CD4-positive, alpha-beta memory T cell (primary cell): ENCODE measurements at regions of chr13 and their contacts with region 1.

Region 1: DNA sequence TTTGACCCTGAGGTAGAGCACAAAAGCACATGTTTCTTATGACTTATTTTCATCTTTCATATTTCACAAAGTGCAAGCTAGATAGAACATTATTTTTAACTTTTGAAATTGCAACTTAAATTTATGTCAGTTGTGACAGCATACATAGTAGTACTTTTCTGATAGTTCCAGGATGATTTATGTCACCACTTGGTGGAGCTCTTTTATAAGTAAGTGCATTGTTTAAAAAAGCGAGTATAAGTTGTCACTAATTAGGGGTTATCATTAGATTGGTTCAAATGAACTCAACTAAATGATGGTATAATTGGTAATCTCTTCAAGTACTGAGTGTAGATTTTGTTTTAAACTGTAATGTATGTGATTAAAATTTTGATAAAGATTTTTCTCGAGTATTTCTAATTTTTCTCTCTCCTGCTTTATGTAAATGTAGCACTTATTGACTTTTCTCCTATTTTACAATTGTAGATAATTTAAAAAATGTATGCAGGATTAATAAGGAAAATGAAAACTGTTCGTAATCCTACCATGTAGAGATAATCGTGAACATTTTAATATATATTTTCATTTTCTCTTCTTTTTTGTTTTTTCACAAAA is 31.1 kb downstream of the RB1 start:
- DNase-seq: peak in 4 of 5 donors; percentile 50 to 55 (median 52)
- H3K4me3 ChIP-seq: no peak overlapping the region
- H3K4me3 Mint-ChIP-seq: no peak overlapping the region
- H3K27ac ChIP-seq: no peak overlapping the region
- H3K27ac Mint-ChIP-seq: peak overlapping the region in 1 of 7 donors; percentile 13
- H3K4me1 ChIP-seq: peaks cover 8% of the 10 kb centered on the region
- H3K4me1 Mint-ChIP-seq: peaks cover 6 to 16% (median 10%) of the 10 kb centered on the region in 4 donors
- H3K27me3 ChIP-seq: no peaks in the 10 kb centered on the region
- H3K27me3 Mint-ChIP-seq: no peaks in the 10 kb centered on the region

Region 2: DNA sequence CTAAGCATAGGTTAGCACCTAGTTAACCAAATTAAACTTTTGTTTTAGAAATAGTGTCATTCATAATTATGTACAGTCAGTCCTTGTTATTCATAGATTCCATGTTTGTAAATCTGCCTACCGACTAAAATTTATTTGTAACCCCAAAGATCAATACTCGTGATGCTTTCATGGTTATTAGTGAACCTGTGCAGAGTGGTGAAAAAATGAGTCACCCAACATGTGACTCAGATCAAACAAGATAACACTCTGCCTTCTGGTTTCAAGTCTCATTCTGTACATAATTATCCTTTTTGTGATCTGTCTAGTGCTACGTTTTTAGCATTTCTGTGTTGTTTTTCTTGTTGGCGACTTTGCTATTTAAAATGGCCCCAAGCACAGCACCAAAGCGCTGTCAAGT is 608.3 kb before region 1 on chr13:
- CTCF ChIA-PET with region 1: no interaction called
- POLR2A ChIA-PET with region 1: no interaction called
- intact Hi-C with region 1: no loop called
- DNase-seq: no peak
- H3K4me3 ChIP-seq: no peak overlapping the region
- H3K4me3 Mint-ChIP-seq: no peak overlapping the region
- H3K27ac ChIP-seq: no peak overlapping the region
- H3K27ac Mint-ChIP-seq: no peak overlapping the region
- H3K4me1 ChIP-seq: no peaks in the 10 kb centered on the region
- H3K4me1 Mint-ChIP-seq: no peaks in the 10 kb centered on the region
- H3K27me3 ChIP-seq: no peaks in the 10 kb centered on the region
- H3K27me3 Mint-ChIP-seq: no peaks in the 10 kb centered on the region

Region 3: DNA sequence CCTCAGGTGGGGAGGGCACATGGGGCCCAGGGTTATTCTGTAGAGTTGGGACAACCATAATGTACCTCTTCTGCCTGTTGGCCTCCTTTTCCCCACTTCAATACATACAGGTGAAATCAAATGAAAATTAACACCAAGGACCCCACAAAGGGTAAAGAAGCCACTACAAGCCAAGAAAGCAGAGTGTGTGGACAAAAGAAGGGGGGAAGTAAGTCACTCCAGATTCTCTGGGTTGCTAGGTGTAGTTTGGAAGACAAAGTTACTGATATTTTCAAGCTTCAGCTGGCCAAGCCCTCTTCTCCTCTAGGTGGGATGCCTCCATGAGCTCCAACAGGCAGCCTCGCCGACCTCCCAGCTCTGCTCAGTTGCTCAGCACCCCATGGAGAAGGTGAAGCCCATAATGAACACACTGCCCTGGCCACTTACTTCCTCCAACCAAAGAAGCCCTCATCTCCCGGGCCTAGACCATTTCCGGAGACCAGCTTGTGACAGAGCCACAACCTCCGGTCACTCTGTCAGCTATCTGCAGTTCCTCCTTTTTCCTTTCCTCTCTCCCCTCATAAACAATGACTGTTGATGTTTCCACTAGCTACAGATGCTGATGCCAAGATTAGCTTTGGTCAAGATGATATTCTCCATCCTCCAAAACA is 173.0 kb before region 1 on chr13:
- CTCF ChIA-PET with region 1: no interaction called
- POLR2A ChIA-PET with region 1: no interaction called
- intact Hi-C with region 1: no loop called
- DNase-seq: no peak
- H3K4me3 ChIP-seq: no peak overlapping the region
- H3K4me3 Mint-ChIP-seq: no peak overlapping the region
- H3K27ac ChIP-seq: no peak overlapping the region
- H3K27ac Mint-ChIP-seq: peak overlapping the region in 2 of 7 donors; percentile 49 to 54
- H3K4me1 ChIP-seq: peaks cover 39% of the 10 kb centered on the region
- H3K4me1 Mint-ChIP-seq: peaks cover 17 to 48% (median 31%) of the 10 kb centered on the region in 4 donors
- H3K27me3 ChIP-seq: no peaks in the 10 kb centered on the region
- H3K27me3 Mint-ChIP-seq: no peaks in the 10 kb centered on the region

Region 4: GRCh38 chr13:48571126-48571913 is 236.7 kb after region 1 on chr13:
- CTCF ChIA-PET with region 1: interaction called, 238 read pairs
- POLR2A ChIA-PET with region 1: no interaction called
- intact Hi-C with region 1: no loop called
- DNase-seq: no peak
- H3K4me3 ChIP-seq: no peak overlapping the region
- H3K4me3 Mint-ChIP-seq: peak overlapping the region in 5 of 8 donors; percentile 12 to 47 (median 31)
- H3K27ac ChIP-seq: no peak overlapping the region
- H3K27ac Mint-ChIP-seq: peak overlapping the region in 3 of 7 donors; percentile 14 to 66 (median 25)
- H3K4me1 ChIP-seq: peaks cover 43% of the 10 kb centered on the region
- H3K4me1 Mint-ChIP-seq: peaks cover 17 to 54% (median 33%) of the 10 kb centered on the region in 4 donors
- H3K27me3 ChIP-seq: no peaks in the 10 kb centered on the region
- H3K27me3 Mint-ChIP-seq: peaks cover 0 to 2% of the 10 kb centered on the region in 2 donors

Region 5: DNA sequence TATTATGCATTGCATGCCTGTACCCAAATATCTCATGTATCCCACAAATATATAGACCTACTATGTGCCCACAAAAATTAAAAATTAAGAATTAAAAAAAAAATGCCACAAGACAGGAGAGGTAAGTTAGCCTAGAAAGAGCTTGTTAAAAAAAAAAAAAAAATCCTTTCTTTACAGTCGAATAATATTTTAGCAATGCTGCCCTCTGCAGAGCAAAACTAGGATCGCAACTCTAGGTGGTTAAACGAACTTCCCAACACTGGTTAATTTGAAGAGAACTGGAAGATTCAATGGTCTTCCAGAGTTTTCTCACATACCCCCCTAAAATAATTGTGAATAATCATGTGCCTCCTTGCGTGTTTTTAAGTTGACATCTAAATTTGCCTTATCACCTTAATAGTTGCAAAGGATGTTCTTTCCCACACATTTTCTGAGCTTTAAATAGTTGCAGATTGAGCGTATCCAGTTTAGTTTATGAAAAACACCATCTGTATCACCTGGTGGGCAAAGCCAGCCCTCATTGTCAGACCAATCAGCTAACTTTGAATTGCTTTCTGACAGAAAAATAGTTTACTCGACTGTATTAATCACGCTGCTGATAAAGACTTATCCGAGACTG is 245.7 kb after region 1 on chr13:
- CTCF ChIA-PET with region 1: interaction called, 238 read pairs
- POLR2A ChIA-PET with region 1: interaction called, 21 read pairs
- intact Hi-C with region 1: loop called (anchors 1 kb)
- DNase-seq: peak; percentile 64 to 74 (median 70)
- H3K4me3 ChIP-seq: no peak overlapping the region
- H3K4me3 Mint-ChIP-seq: peak overlapping the region in 1 of 8 donors; percentile 31
- H3K27ac ChIP-seq: no peak overlapping the region
- H3K27ac Mint-ChIP-seq: peak overlapping the region in 2 of 7 donors; percentile 0 to 43
- H3K4me1 ChIP-seq: peaks cover 19% of the 10 kb centered on the region
- H3K4me1 Mint-ChIP-seq: peaks cover 4 to 28% (median 13%) of the 10 kb centered on the region in 4 donors
- H3K27me3 ChIP-seq: no peaks in the 10 kb centered on the region
- H3K27me3 Mint-ChIP-seq: peaks cover 0 to 4% of the 10 kb centered on the region in 2 donors

Region 6: GRCh38 chr13:48731957-48732569 is 397.4 kb after region 1 on chr13:
- CTCF ChIA-PET with region 1: interaction called, 24 read pairs
- POLR2A ChIA-PET with region 1: no interaction called
- intact Hi-C with region 1: loop called (anchors 1 kb)
- DNase-seq: peak in 4 of 5 donors; percentile 38 to 54 (median 50)
- H3K4me3 ChIP-seq: no peak overlapping the region
- H3K4me3 Mint-ChIP-seq: peak overlapping the region; percentile 60 to 89 (median 84)
- H3K27ac ChIP-seq: no peak overlapping the region
- H3K27ac Mint-ChIP-seq: peak overlapping the region in 3 of 7 donors; percentile 53 to 75 (median 60)
- H3K4me1 ChIP-seq: no peaks in the 10 kb centered on the region
- H3K4me1 Mint-ChIP-seq: peaks cover 10 to 17% (median 15%) of the 10 kb centered on the region in 4 donors
- H3K27me3 ChIP-seq: no peaks in the 10 kb centered on the region
- H3K27me3 Mint-ChIP-seq: peaks cover 0 to 3% of the 10 kb centered on the region in 2 donors